BJ (cell line): ENCODE measurements at regions of chr3 and their contacts with region 1.

Region 1: DNA sequence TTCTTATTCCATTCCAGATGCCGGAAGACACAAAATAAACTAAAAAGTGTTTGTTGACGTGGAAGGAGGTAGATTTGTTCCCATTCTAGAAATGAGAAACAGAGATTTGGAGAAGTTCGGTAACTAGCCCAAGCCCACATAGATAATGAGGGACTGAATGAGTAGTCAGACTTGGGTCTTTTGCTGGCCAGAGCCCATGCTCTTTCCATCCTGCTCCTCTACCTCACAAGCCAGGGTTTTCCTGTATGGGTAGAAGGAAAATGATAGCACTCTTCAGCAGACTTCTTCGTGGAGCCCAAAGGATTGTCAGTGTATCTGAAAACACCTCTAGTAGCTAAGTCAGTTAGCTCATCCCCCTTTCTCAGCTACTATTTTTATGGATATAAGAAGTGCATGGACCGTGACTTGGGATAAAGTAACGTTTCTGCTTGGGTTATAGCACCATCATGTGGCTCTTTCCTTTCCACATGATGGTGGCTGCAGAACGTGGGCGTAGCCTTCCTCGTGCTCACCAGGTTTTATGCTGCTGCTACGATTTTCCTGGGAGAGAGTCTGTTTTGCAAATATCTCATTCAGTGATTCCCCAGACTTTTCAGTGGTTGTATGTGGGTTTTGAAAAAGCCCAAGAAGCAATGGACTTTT is 84.6 kb downstream of the DGKG start:
- DNase-seq: no peak
- H3K4me3 ChIP-seq: no peak overlapping the region
- H3K27me3 ChIP-seq: peaks cover 1% of the 10 kb centered on the region
- CTCF ChIP-seq: peak; percentile 61

Region 2: DNA sequence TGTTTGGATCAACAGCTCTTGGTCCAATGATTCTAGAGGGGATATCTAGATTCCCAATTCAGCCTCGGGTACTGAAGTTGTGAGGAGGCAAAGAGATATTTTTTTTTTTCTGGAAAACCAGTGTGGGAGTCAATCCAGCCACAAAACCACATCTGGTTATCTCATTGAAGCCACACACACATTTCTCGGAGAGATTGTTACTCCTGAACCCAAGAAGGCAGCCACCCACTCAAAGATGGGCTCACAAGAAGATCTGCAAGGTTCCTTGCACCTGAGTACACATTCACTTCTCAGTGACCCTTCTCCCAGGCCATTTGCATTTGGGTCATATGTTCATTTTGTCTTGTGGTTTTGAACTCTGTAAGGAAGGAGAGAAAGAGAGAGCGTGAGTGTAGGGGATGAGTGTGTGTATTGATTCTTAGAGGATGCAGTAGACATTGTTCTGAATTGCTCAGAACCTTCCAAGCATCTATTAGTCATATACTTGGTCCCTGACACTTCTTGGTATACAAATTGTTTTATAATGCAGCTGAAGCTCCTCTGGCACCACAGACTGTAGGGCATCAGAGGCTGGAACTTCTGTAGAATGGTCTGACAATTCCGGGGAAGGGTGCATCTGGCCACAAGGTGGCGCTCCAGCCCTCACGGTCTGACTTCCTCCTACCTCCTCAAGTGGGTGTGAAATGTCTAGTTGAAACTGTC is 300.3 kb before region 1 on chr3:
- CTCF ChIA-PET with region 1: interaction called, 29 read pairs
- POLR2A ChIA-PET with region 1: no interaction called
- DNase-seq: no peak
- H3K4me3 ChIP-seq: no peak overlapping the region
- H3K27me3 ChIP-seq: no peaks in the 10 kb centered on the region
- CTCF ChIP-seq: peak; percentile 96

Region 3: GRCh38 chr3:185983495-185984141 is 293.8 kb before region 1 on chr3:
- CTCF ChIA-PET with region 1: interaction called, 29 read pairs
- POLR2A ChIA-PET with region 1: interaction called, 4 read pairs
- DNase-seq: no peak
- H3K4me3 ChIP-seq: no peak overlapping the region
- H3K27me3 ChIP-seq: peaks cover 3% of the 10 kb centered on the region; the same call in 1 of the 2 replicates
- CTCF ChIP-seq: peak; percentile 90

Region 4: GRCh38 chr3:186700267-186700666 is 422.9 kb after region 1 on chr3:
- CTCF ChIA-PET with region 1: no interaction called
- POLR2A ChIA-PET with region 1: no interaction called
- DNase-seq: no peak
- H3K4me3 ChIP-seq: no peak overlapping the region
- H3K27me3 ChIP-seq: 0 out of 2 replicates have a peak, but pooled peaks cover 1% of the 10 kb centered on the region
- CTCF ChIP-seq: no peak